Ascending aorta (tissue), 2 donors: ENCODE measurements at regions of chr16 and their contacts with region 1.

Region 1: DNA sequence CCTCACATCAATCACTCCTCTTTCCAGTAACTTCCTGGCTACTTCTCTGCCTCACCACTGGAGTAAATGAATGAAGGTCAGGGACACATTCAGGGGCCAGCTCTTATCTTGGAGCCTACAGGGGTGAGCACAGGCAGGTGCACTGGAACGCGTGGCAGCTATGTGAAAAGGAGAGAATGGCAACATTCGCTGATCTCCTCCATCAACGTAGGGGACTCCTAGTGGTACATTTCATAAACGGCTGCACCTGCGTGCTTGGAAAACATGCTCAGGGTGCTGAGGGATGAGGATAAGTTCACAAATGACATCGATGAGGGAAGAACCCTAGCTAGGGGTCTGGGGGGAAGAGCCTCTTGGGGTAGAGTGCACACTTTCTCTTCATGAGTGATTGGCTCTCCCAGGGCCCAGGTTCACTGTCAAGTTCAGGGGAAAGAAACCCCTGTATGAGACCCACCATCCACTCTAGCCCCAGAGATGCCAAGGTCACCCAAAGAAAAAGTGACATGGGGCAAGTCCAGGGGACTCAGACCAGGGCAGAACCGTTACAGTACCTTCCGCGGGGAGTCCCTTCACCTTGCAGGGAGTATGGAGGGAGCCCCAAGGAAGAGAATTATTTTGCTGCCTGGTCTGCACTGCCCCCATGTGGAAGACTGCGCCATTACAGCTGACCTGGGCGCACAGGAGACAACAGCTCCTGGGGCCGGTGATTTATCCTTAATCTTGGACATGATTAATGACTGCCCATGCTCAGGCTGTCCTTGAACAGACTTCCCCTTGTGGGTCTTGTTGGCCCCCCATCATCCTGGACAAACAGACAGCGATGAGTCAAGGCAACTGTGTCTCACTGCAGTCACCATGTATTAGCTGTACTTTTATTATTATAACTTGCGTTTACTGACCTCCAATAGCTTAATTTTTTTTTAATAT is 30.1 kb downstream of the VAC14 start:
- DNase-seq: peak in 1 of 2 donors; percentile 78
- H3K4me3 ChIP-seq: no peak overlapping the region
- H3K27ac ChIP-seq: no peak overlapping the region
- H3K4me1 ChIP-seq: peaks cover 0 to 5% of the 10 kb centered on the region in 2 donors
- H3K27me3 ChIP-seq: no peaks in the 10 kb centered on the region
- CTCF ChIP-seq: peak; percentile 92 to 98 (median 96)

Region 2: GRCh38 chr16:70529051-70529777 is 241.7 kb before region 1 on chr16:
- intact Hi-C with region 1: loop called (anchors 5 kb)
- DNase-seq: no peak
- H3K4me3 ChIP-seq: no peak overlapping the region
- H3K27ac ChIP-seq: no peak overlapping the region
- H3K4me1 ChIP-seq: peaks cover 8 to 24% of the 10 kb centered on the region in 2 donors
- H3K27me3 ChIP-seq: no peaks in the 10 kb centered on the region
- CTCF ChIP-seq: peak; percentile 37 to 52 (median 51)

Region 3: DNA sequence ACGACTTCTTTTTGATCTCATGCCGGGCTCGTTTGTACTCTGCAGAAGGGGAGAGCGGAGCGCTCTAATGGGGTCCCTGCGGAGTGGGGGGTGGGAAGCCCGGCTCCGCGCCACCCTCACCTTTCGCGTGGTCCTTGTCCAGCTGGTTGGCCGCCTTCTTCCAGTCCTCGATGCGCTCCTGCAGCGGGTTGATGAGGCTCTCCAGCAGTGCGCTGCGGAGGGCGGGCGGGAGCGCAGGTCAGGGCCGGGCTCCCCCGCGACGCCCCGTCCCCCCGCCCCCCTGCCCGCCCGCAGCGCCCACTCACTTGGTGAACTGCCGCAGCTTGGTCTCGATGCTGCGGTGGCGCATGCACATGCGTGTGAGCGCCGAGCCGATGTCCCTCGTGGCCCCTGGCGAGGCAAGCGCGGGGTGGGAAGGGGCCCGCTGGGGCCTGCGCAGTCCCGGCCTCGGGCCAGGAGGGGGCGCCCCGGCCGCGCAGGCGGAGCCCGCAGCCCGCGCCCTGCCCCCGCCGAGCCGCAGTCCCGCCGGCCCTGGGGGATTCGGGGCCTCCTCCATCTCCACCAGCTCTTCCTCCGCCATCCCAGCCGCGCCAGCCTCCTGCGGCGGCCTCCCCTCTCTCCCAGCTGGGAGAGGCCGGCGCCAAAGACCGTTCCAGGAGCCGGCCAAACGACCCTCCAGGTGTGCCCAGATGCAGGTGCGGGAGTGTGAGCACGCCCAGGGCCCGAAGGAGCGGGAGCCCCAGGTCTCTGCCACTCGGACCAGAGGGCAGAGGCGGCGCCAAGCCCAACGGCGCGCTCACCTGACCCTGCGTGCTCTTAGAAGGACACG is 91.0 kb before region 1 on chr16:
- intact Hi-C with region 1: loop called (anchors 1 kb)
- DNase-seq: no peak
- H3K4me3 ChIP-seq: no peak overlapping the region
- H3K27ac ChIP-seq: peak overlapping the region; percentile 74 to 84
- H3K4me1 ChIP-seq: peaks cover 18 to 46% of the 10 kb centered on the region in 2 donors
- H3K27me3 ChIP-seq: no peaks in the 10 kb centered on the region
- CTCF ChIP-seq: peak; percentile 26 to 85 (median 41)

Region 4: GRCh38 chr16:70737377-70738082 is 33.4 kb before region 1 on chr16:
- intact Hi-C with region 1: loop called (anchors 5 kb)
- DNase-seq: peak; percentile 45 to 85
- H3K4me3 ChIP-seq: no peak overlapping the region
- H3K27ac ChIP-seq: peak overlapping the region; percentile 90 to 91
- H3K4me1 ChIP-seq: peaks cover 14 to 32% of the 10 kb centered on the region in 2 donors
- H3K27me3 ChIP-seq: no peaks in the 10 kb centered on the region
- CTCF ChIP-seq: no peak

Region 5: DNA sequence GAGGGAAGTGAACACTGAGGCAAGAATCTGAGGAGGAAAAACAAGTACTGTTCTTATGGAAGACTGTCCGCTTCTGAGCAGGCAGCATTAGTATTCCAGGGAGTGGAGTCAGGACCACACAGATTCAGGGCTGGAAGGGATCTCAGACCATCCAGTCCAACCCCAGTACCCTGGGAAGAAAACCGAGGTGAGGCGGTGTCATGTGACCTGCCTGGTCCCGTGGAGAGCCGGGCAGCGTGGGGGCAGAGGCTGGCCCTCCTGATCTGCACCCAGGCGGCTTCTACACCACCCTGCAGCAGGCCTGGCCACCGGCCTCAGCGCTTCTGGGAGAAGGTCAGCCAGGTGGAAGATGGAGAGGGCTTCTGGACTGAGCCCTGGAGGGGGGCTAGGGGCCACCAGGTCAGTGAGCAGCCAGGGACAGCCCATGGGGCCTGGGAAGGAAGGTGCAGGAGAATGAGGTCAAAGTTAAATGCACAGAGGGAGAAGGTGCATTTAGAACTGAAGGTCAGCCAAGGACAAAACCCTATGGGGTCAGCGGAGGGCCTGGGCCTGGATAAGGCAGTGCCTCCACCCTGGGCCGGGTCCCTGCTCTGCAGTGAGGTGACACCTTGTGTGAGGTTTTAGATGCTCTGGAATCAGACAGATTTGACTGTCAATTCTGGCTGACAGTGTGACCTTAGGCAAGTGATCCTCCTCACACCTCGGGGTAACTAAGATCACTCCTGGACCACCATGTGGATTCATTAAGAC is 15.9 kb before region 1 on chr16:
- intact Hi-C with region 1: loop called (anchors 2 kb)
- DNase-seq: no peak
- H3K4me3 ChIP-seq: no peak overlapping the region
- H3K27ac ChIP-seq: peak overlapping the region; percentile 53 to 75
- H3K4me1 ChIP-seq: peaks cover 17 to 55% of the 10 kb centered on the region in 2 donors
- H3K27me3 ChIP-seq: no peaks in the 10 kb centered on the region
- CTCF ChIP-seq: no peak